GM10248 (cell line): ENCODE measurements at regions of chr6 and their contacts with region 1.

Region 1: GRCh38 chr6:161029195-161029809 is 37.7 kb downstream of the MAP3K4 start:
- DNase-seq: peak; percentile 52
- CTCF ChIP-seq: no peak

Region 2: GRCh38 chr6:160871320-160871719 is 158.0 kb before region 1 on chr6:
- CTCF ChIA-PET with region 1: no interaction called
- POLR2A ChIA-PET with region 1: no interaction called
- DNase-seq: no peak
- CTCF ChIP-seq: no peak

Region 3: GRCh38 chr6:161017766-161018564 is 11.3 kb before region 1 on chr6:
- CTCF ChIA-PET with region 1: interaction called, 18 read pairs
- POLR2A ChIA-PET with region 1: no interaction called
- DNase-seq: no peak
- CTCF ChIP-seq: no peak